GM18951 (cell line): ENCODE measurements at regions of chr6 and their contacts with region 1.

Region 1: GRCh38 chr6:150813319-150813992 is 52.0 kb upstream of the MTHFD1L start:
- POLR2A ChIP-seq: no peak

Region 2: GRCh38 chr6:150046943-150047342 is 766.5 kb before region 1 on chr6:
- in situ Hi-C with region 1: no loop called
- POLR2A ChIP-seq: no peak

Region 3: DNA sequence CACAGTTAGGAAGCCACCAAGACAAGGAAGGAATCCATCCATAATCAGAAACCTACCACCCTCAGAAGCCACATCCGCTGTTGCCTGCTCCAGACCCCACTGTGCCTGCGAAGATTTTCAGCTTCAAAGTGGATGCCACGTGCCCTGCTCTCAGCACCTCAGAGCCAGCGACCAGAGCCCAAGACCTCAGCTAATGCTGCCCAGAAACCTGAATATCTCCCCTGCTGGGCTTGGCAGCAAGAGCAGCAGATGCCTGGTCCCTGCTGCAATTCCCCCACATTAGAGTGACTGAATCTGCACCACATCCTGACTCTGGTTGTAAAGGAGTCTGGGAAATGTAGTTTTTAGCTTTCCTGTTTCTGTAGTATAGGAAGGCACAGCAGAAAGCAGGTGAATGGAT is 733.9 kb before region 1 on chr6:
- in situ Hi-C with region 1: loop called (anchors 10 kb)
- POLR2A ChIP-seq: no peak

Region 4: DNA sequence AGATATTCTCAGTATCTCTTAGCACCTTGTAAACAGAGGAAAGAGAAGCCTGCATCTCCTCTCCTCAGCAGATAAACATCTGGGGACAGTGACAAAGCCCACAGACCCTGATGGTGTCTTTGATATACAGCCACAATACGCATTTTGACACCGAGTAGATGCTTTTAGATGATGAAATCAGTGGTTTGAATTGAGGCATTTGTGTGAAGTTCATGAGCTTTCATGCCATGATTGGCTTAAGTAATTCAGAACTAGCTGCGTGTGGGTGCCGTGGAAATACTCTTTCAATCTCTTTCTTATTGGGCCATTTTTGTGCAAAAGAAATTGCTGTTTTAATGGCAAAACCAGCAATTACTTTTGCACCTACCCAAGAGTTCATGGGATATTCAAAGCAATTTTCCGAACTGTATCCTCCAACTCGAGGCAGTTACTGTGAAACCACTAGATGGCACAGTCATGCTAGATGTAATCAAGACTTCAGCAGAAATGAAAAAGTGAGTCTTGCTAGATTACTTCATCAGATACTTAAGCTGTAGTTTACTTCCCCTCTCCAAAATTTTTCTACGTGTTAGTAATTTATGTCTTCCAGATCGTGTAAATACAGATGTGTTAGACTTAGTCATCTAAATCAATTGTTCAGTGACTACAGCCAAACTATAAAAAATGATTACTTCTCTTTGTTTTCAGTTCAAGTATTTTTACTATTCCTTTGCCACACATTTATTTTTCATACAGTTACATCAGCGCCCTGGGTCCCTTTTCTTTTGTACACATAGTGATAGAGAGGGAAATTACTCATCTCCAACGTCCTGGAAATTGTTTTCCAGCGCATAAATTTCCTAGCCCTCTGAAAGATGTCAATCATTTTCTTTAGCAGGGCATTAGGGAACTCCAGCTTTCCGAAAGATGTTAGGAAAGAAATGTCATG is 395.3 kb before region 1 on chr6:
- in situ Hi-C with region 1: loop called (anchors 5 kb)
- POLR2A ChIP-seq: no peak

Region 5: DNA sequence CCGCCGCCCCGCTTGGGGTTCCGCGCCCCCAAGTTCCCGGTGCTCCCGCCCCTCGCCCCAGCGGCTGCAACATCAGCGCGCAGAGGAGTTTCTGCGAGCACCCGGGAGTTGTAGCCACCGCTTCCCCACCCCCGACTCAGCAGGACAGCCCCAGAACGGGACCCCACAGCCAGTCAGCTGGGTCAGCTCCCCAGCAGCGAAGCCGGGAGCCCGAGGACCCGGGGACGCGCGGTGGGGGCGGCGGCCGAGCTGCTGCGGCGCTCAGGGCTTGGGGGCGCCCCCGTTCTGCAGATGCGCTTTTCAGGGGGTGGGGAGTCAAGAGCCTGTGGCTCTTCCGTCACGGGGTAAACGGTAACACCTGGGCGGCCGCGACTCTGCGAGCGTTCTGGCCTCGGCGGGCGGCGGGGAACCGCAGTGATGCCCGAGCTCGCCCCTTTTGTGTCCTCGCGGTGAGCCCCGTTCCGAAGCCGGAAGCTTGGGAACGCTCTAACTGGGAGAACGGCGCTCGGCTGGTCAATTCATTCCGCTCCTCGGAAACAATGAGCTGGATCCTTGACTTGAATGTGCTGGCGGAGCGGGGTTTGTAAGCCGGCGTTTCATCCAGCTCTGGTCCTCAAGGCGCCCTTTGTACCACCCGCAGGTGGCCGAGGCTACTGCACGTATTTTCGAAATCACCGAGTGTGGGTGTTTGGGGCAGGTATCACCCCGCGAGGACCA is 213.0 kb before region 1 on chr6:
- in situ Hi-C with region 1: no loop called
- POLR2A ChIP-seq: no peak

Region 6: DNA sequence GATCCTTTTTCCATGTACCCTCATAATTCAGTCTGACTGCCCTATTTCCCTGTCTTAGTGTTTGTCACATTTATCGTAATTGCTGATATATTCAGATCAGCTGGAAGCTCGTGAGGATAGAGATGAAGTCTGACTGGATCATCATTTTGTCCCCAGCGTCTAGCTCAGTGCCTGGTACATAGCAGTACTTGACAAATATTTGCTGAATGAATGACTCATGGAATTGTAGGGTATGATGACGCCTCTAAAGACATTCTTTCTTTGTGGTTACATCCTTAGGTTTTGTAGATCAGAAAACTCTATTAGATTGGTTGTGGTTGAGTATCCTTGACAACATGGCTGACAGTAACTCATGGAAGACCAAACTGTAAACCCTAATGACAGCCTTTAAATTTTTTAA is 120.9 kb after region 1 on chr6:
- in situ Hi-C with region 1: no loop called
- POLR2A ChIP-seq: no peak